Activated B cell treated with CpG ODN at 0.5 μM for 24 hours (primary cell): ENCODE measurements at regions of chr16 and their contacts with region 1.

Region 1: DNA sequence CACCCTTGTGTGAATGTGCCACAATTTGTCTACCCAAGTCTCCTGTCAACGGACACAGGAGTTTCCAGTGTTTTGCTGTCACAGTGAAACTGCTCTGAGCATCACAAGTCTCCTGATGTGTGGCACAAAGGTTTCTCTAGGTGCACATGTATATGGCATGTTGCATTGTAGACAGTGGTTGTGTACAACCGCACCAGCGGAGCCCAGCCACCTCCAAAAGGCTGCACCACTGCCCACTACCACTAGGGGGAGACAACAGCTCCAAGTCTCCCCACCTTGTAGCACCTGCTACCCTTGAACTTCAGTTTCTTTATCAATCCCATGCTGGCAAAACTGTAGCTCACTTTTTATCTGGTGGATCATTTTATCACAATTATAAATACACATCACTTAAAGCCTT is 95.5 kb upstream of the ZNF469 start:
- DNase-seq: no peak
- ATAC-seq: no peak
- H3K4me3 Mint-ChIP-seq: no peak overlapping the region
- H3K27ac Mint-ChIP-seq: no peak overlapping the region
- H3K4me1 Mint-ChIP-seq: no peaks in the 10 kb centered on the region
- H3K27me3 Mint-ChIP-seq: peaks cover 6% of the 10 kb centered on the region
- CTCF ChIP-seq: no peak

Region 2: DNA sequence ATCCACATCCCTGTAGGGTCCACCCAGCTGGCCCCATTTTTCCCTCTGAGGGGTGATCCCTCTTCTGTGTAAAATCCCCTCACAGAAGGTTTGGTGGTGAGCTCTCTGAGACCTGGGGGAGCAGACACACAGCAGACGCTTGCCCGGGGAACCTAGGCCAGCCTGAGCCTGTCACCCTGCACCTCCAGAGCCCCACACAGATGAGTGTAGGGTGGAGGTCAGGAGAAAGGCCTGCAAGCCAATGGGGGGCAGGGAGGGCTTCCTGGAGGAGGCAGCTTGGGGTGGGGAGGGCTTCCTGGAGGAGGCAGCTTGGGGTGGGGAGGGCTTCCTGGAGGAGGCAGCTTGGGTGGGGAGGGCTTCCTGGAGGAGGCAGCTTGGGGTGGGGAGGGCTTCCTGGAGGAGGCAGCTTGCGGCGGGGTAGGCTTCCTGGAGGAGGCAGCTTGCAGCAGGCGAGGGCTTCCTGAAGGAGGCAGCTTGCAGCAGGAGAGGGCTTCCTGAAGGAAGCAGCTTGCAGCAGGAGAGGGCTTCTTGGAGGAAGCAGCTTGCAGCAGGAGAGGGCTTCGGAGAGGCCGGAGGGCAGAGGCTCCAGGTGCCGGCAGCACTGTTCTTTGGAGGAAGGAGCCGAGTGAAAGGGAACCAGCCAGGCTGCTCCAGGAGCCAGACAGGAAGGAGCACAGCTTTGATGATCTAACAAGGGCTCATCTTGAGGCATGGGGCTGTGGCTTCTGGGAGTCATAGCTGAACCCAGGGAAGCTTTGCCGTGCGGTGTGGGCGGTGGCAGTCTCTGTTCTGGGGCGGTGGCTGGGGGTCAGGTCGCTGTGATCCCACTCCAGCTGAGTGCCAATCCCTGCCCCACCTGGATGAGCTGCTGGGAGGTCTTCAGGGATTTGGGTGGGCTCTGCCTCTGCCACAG is 11.9 kb after region 1 on chr16:
- CTCF ChIA-PET with region 1: no interaction called
- POLR2A ChIA-PET with region 1: interaction called, 17 read pairs
- intact Hi-C with region 1: no loop called
- DNase-seq: no peak
- ATAC-seq: no peak
- H3K4me3 Mint-ChIP-seq: no peak overlapping the region
- H3K27ac Mint-ChIP-seq: no peak overlapping the region
- H3K4me1 Mint-ChIP-seq: no peaks in the 10 kb centered on the region
- H3K27me3 Mint-ChIP-seq: peaks cover 3% of the 10 kb centered on the region
- CTCF ChIP-seq: no peak